Testis (tissue), 5 donors: ENCODE measurements at regions of chr6 and their contacts with region 1.

Region 1: GRCh38 chr6:166275714-166276166 is 32.5 kb downstream of the PRR18 start:
- DNase-seq: peak; percentile 79
- H3K4me3 ChIP-seq: no peak overlapping the region
- H3K27ac ChIP-seq: no peak overlapping the region
- H3K4me1 ChIP-seq: no peaks in the 10 kb centered on the region
- H3K27me3 ChIP-seq: no peaks in the 10 kb centered on the region
- CTCF ChIP-seq: peak; percentile 57 to 91 (median 74)
- POLR2A ChIP-seq: no peak

Region 2: GRCh38 chr6:166244353-166245045 is 31.2 kb before region 1 on chr6:
- intact Hi-C with region 1: no loop called
- DNase-seq: no peak
- H3K4me3 ChIP-seq: no peak overlapping the region
- H3K27ac ChIP-seq: no peak overlapping the region
- H3K4me1 ChIP-seq: no peaks in the 10 kb centered on the region
- H3K27me3 ChIP-seq: no peaks in the 10 kb centered on the region
- CTCF ChIP-seq: no peak
- POLR2A ChIP-seq: no peak

Region 3: GRCh38 chr6:166394036-166394892 is 118.5 kb after region 1 on chr6:
- intact Hi-C with region 1: loop called (anchors 10 kb)
- DNase-seq: no peak
- H3K4me3 ChIP-seq: no peak overlapping the region
- H3K27ac ChIP-seq: no peak overlapping the region
- H3K4me1 ChIP-seq: no peaks in the 10 kb centered on the region
- H3K27me3 ChIP-seq: no peaks in the 10 kb centered on the region
- CTCF ChIP-seq: no peak
- POLR2A ChIP-seq: no peak

Region 4: DNA sequence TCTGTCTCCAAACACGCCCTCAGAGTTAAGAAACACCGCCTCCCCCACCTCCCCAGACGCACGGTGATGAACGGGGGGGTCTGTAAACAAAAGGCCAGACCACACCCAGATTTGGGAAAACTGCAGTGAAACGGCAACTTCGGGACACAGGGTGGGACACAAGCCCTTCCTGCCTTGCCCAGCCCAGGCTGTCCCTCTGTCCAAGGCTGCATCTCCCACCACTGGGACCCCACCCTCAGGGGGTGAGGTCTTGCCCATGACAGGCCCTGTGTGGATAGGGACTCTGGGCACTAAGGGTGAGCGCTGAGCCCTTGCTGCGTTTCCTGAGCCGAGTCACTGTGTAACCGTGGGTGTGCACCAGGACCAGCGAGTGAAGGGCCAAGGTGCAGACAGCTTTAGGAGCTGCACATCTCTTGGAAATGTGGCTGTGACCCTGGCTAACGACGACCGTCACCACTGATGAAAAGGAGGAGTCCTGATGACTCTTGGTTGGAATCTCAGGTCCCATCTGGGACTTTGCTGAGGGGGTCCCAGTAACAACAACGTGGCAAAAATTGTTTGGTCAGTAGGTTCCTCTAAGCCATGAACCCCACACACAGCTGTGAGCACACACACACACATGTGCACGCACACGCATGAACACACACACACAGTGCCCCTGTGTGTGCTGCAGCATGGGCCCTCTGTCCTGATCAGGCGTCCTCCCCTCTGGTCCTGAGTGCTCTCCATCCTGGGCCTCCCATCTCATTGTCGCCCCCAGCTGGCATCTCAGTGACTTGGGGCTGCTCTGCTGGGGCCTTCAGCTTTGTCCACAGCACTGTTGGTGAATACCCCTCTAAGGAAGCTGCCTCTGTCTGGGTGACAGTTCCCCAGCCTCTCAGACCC is 210.2 kb after region 1 on chr6:
- intact Hi-C with region 1: no loop called
- DNase-seq: no peak
- H3K4me3 ChIP-seq: no peak overlapping the region
- H3K27ac ChIP-seq: no peak overlapping the region
- H3K4me1 ChIP-seq: peaks cover 1% of the 10 kb centered on the region
- H3K27me3 ChIP-seq: no peaks in the 10 kb centered on the region
- CTCF ChIP-seq: no peak
- POLR2A ChIP-seq: no peak